CD4-positive, alpha-beta T cell (primary cell): ENCODE measurements at regions of chr9 and their contacts with region 1.

Region 1: DNA sequence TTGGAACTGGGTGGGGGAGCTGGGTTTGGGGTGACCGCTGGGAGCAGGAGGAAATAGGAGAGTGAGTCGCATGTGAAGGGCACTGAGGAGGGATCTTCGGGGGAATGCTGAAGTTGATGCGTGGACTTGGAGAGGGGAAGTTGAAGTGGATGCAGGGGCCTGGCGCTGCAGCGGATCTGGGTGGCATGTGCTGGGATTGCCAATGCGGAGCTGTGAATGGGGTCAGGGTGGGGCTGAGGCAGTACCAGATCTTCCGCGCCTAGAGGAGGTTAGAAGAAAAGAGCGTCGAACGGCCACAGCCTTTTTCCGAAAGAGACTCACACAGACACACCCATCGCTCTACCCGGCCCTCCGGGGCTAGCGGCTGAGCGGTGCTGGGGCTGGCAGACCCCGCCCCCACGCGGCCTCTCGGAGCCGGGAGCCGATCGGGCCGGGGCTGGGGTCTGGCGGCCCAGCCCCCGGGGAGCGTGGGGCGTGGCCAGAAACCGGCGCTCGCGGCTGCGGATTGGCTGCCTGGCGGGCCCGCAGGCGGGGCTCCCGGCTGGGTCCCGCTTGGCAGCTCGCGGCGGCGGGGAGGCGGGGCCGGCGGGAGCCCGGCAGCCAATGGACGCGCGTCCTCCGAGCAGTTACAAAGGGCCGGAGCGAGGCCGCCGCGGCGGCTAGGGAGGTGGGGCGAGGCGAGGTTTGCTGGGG is at the start of gene TGFBR1:
- DNase-seq: peak; percentile 81 to 96 (median 88)
- ATAC-seq: peak; percentile 83
- H3K4me3 ChIP-seq: peak within 1 kb of the TSS; percentile 81
- H3K4me3 Mint-ChIP-seq: peak within 1 kb of the TSS; percentile 93
- H3K27ac ChIP-seq: peak within 1 kb of the TSS; percentile 65 to 74
- H3K27ac Mint-ChIP-seq: peak within 1 kb of the TSS; percentile 93
- H3K4me1 ChIP-seq: peaks cover 42% of the 10 kb centered on the region
- H3K4me1 Mint-ChIP-seq: peaks cover 60% of the 10 kb centered on the region
- H3K27me3 ChIP-seq: no peaks in the 10 kb centered on the region
- H3K27me3 Mint-ChIP-seq: no peaks in the 10 kb centered on the region
- CTCF ChIP-seq: no peak
- total RNA-seq, gene TGFBR1: 12.9 to 14.6 TPM

Region 2: GRCh38 chr9:97747201-97747965 is 1357.2 kb before region 1 on chr9:
- CTCF ChIA-PET with region 1: no interaction called
- POLR2A ChIA-PET with region 1: no interaction called
- intact Hi-C with region 1: no loop called
- DNase-seq: no peak
- ATAC-seq: no peak
- H3K4me3 ChIP-seq: no peak overlapping the region
- H3K4me3 Mint-ChIP-seq: no peak overlapping the region
- H3K27ac ChIP-seq: no peak overlapping the region
- H3K27ac Mint-ChIP-seq: no peak overlapping the region
- H3K4me1 ChIP-seq: no peaks in the 10 kb centered on the region
- H3K4me1 Mint-ChIP-seq: no peaks in the 10 kb centered on the region
- H3K27me3 ChIP-seq: peaks cover 24 to 33% of the 10 kb centered on the region in 2 experiments
- H3K27me3 Mint-ChIP-seq: peaks cover 57% of the 10 kb centered on the region
- CTCF ChIP-seq: no peak

Region 3: DNA sequence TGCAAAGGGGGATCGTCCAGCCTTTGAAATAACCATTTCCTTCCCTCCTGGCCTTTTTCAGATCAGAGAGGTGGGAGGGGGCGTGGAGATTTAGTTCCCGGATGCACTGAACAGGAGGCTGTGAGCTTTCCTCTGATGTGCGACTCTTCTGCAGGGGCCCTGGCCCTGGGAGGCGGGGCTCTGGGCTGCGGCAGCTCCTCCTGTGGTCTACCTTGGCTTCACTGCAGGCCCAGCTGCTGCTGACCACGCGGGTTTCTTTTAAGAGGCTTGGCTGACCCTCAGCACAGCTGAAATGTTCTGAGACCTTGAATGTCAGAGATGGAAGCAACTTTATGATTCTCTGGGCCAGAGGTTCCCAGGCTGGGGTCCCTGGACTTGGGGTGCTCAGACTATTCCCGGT is 187.9 kb before region 1 on chr9:
- CTCF ChIA-PET with region 1: no interaction called
- POLR2A ChIA-PET with region 1: no interaction called
- intact Hi-C with region 1: no loop called
- DNase-seq: no peak
- ATAC-seq: no peak
- H3K4me3 ChIP-seq: no peak overlapping the region
- H3K4me3 Mint-ChIP-seq: no peak overlapping the region
- H3K27ac ChIP-seq: no peak overlapping the region
- H3K27ac Mint-ChIP-seq: no peak overlapping the region
- H3K4me1 ChIP-seq: no peaks in the 10 kb centered on the region
- H3K4me1 Mint-ChIP-seq: no peaks in the 10 kb centered on the region
- H3K27me3 ChIP-seq: no peaks in the 10 kb centered on the region
- H3K27me3 Mint-ChIP-seq: no peaks in the 10 kb centered on the region
- CTCF ChIP-seq: no peak

Region 4: DNA sequence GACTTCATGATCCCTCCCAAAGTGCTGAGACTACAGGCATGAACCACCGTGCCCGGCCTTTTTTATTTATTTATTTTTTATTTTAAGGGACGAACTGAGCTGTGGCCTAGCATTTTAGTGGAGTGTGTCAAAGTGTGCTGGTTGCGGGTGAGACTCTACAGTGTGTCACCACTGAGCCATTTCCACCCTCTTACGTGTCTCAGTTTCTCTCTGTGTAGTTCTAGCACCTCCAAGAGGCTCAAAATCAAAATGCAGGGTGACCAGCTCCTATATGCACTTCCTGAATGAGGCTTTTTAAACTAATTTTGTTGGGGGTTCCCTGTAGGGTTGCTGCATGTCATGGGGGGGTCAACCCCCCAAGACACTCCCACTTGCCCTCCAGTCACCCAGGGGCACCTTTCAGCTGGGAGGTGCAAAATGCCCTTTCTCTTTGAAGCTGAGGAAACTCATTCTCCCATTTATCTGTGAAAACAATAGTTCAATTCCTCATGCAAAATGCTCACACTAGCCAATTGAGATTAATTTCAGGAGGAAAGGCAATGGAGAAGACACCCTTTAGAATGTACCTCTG is 91.6 kb before region 1 on chr9:
- CTCF ChIA-PET with region 1: interaction called, 4 read pairs
- POLR2A ChIA-PET with region 1: interaction called, 20 read pairs
- intact Hi-C with region 1: no loop called
- DNase-seq: peak in 3 of 14 experiments; percentile 27 to 45 (median 41)
- ATAC-seq: no peak
- H3K4me3 ChIP-seq: no peak overlapping the region
- H3K4me3 Mint-ChIP-seq: no peak overlapping the region
- H3K27ac ChIP-seq: peak overlapping the region in 1 of 2 donors; percentile 5
- H3K27ac Mint-ChIP-seq: peak overlapping the region; percentile 76
- H3K4me1 ChIP-seq: peaks cover 16% of the 10 kb centered on the region
- H3K4me1 Mint-ChIP-seq: peaks cover 28% of the 10 kb centered on the region
- H3K27me3 ChIP-seq: no peaks in the 10 kb centered on the region
- H3K27me3 Mint-ChIP-seq: no peaks in the 10 kb centered on the region
- CTCF ChIP-seq: no peak

Region 5: DNA sequence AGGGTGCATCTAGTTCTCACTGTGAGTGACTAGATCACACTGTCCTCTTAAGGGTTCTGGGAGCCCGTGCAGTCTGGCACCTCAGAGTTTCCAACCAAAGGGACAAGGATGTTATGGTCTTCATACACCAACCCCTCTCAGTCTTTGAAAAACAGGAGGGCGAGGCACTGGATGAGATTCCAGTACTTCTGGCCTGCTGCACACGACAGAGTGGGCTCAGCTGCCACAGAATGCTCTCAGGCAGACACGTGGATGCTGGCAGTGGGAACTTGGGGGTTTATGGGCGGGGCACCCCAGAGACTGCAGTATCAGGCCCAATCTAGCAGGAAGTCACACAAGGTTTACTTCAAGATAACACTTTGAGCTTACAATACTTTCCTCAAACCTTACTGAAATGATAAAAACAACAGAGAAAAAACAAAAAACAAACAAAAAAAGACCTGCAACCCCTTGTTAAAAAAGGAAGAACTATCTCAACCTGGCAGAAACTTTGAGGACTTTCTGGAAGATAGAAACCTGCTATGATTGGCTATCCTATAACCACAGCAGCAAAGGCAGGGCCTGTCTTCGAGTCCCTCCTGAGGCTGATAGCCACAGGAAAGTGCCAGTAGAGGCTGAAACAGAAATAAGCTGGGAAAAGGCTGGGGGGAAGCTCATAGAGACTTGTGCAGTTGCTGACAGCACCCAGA is 28.0 kb before region 1 on chr9:
- CTCF ChIA-PET with region 1: no interaction called
- POLR2A ChIA-PET with region 1: interaction called, 20 read pairs
- intact Hi-C with region 1: loop called in 1 of 2 experiments (anchors 2 kb)
- DNase-seq: peak in 11 of 14 experiments; percentile 17 to 83 (median 44)
- ATAC-seq: peak; percentile 93
- H3K4me3 ChIP-seq: no peak overlapping the region
- H3K4me3 Mint-ChIP-seq: peak overlapping the region; percentile 42
- H3K27ac ChIP-seq: peak overlapping the region in 1 of 2 donors; percentile 64
- H3K27ac Mint-ChIP-seq: peak overlapping the region; percentile 68
- H3K4me1 ChIP-seq: peaks cover 37% of the 10 kb centered on the region
- H3K4me1 Mint-ChIP-seq: peaks cover 61% of the 10 kb centered on the region
- H3K27me3 ChIP-seq: no peaks in the 10 kb centered on the region
- H3K27me3 Mint-ChIP-seq: no peaks in the 10 kb centered on the region
- CTCF ChIP-seq: no peak

Region 6: DNA sequence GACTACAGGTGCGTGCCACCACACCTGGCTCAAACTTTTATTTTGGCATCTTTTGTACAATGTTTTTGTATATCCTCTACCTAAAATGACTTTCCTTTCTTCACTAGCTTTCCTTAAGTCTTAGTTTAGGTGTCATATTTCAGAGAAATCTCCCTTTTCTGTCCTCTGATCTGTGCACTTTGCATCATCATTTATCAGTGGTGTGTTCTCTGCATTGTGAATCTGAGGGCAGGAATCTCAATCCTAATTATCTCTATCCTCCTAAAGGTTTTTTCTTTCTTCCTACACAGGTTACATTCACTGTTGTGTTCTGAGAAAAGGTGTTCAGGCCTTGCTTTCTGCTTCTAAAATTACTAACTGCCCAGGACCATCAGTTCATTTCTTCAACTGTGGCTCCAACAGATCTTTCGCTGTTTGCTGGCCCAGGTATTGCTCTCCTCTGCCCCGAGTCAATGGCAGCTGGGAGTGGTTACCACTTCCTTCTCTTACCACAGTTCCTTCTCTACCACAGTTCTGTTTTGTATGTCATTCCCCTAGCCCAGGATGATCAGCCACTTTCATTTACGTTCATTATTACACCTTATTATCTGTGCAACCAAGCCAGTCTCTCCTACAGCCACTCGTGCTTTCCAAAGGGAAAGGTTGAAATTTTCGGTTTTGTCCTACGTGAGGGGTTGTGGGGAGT is 14.3 kb after region 1 on chr9:
- CTCF ChIA-PET with region 1: interaction called, 9 read pairs
- POLR2A ChIA-PET with region 1: interaction called, 52 read pairs
- intact Hi-C with region 1: loop called in 1 of 2 experiments (anchors 1 kb)
- DNase-seq: peak; percentile 21 to 88 (median 46)
- ATAC-seq: peak; percentile 99
- H3K4me3 ChIP-seq: peak overlapping the region; percentile 28
- H3K4me3 Mint-ChIP-seq: peak overlapping the region; percentile 42
- H3K27ac ChIP-seq: peak overlapping the region in 1 of 2 donors; percentile 22
- H3K27ac Mint-ChIP-seq: peak overlapping the region; percentile 70
- H3K4me1 ChIP-seq: peaks cover 32% of the 10 kb centered on the region
- H3K4me1 Mint-ChIP-seq: peaks cover 81% of the 10 kb centered on the region
- H3K27me3 ChIP-seq: no peaks in the 10 kb centered on the region
- H3K27me3 Mint-ChIP-seq: no peaks in the 10 kb centered on the region
- CTCF ChIP-seq: no peak

Region 7: DNA sequence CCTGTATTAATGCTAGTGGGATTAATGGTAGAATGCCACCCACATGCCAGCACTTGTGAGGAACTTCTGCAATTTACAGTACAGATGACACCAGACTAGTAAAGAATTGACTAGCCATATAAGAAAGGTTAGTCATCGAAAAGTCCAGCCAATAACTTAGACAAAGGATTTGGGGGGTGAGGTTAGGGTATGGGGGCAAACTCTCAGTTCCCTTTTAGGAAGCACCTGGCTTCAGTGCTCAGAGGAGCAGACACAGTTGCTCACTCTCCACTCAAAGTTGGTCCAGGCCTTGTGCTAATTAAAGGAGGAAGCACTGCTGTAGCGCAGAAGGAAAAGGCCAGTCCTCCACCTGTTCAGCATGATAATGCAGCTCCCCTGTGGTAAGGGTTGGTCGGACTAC is 25.5 kb after region 1 on chr9:
- CTCF ChIA-PET with region 1: interaction called, 5 read pairs
- POLR2A ChIA-PET with region 1: interaction called, 73 read pairs
- intact Hi-C with region 1: loop called (anchors 1 to 2 kb)
- DNase-seq: peak in 1 of 14 experiments; percentile 30
- ATAC-seq: no peak
- H3K4me3 ChIP-seq: no peak overlapping the region
- H3K4me3 Mint-ChIP-seq: peak overlapping the region; percentile 4
- H3K27ac ChIP-seq: peak overlapping the region in 1 of 2 donors; percentile 8
- H3K27ac Mint-ChIP-seq: peak overlapping the region; percentile 79
- H3K4me1 ChIP-seq: peaks cover 36% of the 10 kb centered on the region
- H3K4me1 Mint-ChIP-seq: peaks cover 92% of the 10 kb centered on the region
- H3K27me3 ChIP-seq: no peaks in the 10 kb centered on the region
- H3K27me3 Mint-ChIP-seq: no peaks in the 10 kb centered on the region
- CTCF ChIP-seq: no peak

Region 8: DNA sequence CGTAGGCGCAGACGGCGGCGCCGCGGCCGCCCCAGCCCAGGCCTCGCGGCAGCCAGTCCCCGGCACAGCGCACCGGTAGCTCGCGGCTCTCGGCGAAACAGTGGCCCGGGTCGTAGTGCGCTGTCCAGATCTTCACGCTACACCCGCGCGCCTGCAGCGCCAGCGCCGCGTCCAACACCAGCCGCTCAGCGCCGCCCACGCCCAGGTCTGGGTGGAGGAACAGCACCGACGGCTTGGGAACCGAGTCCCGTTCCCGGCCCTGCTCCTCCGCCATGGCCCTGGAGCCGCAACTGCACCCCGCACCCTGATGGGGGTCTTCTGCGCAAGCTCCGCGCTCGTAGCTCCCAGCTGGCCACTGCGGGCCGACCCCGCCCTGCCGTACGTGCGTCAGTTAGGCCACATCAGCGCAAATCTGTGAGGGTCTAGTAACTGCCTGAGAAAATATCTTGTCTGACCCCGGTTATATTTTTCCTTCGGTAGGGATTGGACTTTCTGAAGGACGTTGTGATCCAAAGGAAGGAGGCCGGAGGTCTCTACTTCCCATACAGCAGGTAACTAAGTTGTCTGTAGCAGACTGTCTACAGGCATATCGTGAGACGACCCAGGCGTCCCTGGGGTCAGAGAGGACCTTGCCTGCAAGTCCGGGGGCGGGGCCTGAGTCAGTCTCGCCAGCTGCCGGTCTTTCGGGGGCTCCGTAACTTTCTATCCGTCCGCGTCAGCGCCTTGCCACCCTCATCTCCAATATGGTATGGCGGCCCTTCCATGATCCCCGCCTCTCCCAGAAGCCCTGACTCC is 117.2 kb after region 1 on chr9 and contains the starts of genes ALG2 and SEC61B:
- CTCF ChIA-PET with region 1: no interaction called
- POLR2A ChIA-PET with region 1: interaction called, 3 read pairs
- intact Hi-C with region 1: loop called in 1 of 2 experiments (anchors 5 kb)
- DNase-seq: peak; percentile 87 to 96 (median 90)
- ATAC-seq: peak; percentile 84
- H3K4me3 ChIP-seq: peak within 1 kb of the TSS; percentile 91
- H3K4me3 Mint-ChIP-seq: peak within 1 kb of the TSS; percentile 98
- H3K27ac ChIP-seq: peak within 1 kb of the TSS; percentile 89 to 95
- H3K27ac Mint-ChIP-seq: peak within 1 kb of the TSS; percentile 99
- H3K4me1 ChIP-seq: peaks cover 33% of the 10 kb centered on the region
- H3K4me1 Mint-ChIP-seq: peaks cover 81% of the 10 kb centered on the region
- H3K27me3 ChIP-seq: no peaks in the 10 kb centered on the region
- H3K27me3 Mint-ChIP-seq: no peaks in the 10 kb centered on the region
- CTCF ChIP-seq: no peak
- total RNA-seq, gene ALG2: 18.1 to 19.9 TPM
- total RNA-seq, gene SEC61B: 83.4 to 84.2 TPM

Region 9: DNA sequence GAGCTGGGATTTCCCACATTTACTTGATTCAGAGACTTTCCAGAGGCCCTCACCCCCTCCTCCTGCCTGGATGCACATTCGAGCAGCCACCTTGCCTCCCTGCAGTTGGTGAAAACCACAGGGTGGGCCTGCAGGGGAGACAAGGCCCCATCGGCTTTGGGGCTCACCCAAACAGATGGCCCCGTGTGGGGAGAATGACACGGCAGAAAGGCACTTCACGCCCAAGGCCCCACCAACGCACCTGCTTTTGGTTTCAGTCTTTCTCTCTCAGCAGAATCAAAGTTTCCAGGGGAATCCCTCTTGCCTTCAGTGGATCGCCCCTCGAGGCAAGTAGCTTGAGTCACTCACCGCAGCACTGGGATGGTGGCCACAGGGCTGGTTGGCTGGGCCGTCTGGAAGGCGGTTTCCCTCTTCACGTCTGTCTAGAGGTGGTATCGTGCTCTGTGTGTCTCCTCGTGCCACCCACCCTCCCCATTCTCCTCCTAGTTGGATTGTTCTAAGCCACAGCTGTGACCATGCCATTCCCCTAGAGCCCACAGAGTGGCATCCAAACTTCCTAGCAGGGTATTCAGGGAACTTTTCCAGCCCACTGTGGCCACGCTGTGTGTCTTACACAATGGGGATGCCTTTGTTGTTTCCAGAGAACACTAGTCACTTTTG is 149.3 kb after region 1 on chr9:
- CTCF ChIA-PET with region 1: no interaction called
- POLR2A ChIA-PET with region 1: no interaction called
- intact Hi-C with region 1: no loop called
- DNase-seq: peak in 9 of 14 experiments; percentile 9 to 72 (median 16)
- ATAC-seq: peak; percentile 70
- H3K4me3 ChIP-seq: peak overlapping the region; percentile 25
- H3K4me3 Mint-ChIP-seq: peak overlapping the region; percentile 34
- H3K27ac ChIP-seq: no peak overlapping the region
- H3K27ac Mint-ChIP-seq: peak overlapping the region; percentile 42
- H3K4me1 ChIP-seq: peaks cover 9% of the 10 kb centered on the region
- H3K4me1 Mint-ChIP-seq: peaks cover 22% of the 10 kb centered on the region
- H3K27me3 ChIP-seq: no peaks in the 10 kb centered on the region
- H3K27me3 Mint-ChIP-seq: no peaks in the 10 kb centered on the region
- CTCF ChIP-seq: no peak